GM18951 (cell line): ENCODE measurements at regions of chr2 and their contacts with region 1.

Region 1: GRCh38 chr2:218319813-218320365 is 27.6 kb upstream of the TMBIM1 start:
- POLR2A ChIP-seq: no peak

Region 2: DNA sequence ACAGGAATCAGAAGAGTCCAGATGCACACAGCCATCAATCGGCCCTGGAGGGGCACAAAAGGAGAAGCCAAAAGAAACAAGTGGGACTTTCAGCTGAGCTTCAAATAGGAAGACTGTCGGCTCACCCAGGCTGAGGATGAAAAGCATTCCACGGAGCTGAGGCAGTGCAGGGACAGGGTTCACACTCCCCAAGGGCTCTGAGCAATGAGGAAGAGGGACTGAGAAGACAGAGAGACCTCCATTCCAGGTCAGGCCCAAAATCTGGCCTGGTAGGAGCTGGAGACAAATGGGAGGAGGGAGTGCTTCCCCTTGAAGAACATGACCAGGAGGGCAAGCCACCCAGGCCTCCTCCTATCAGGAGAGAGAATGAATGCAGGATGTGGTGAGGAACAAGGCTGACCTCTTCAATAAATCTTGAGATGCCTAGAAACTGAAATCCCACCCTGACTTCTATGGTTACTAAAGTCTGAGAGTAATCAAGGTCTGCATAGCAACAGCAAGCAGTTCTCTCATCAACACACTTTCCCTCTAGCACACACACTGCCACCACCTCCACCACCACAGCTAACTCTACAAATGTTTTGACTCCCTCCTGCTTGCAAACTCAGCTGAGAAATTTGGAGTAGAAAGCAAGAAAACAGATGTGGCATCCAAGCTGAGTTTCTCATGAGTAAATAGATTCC is 751.5 kb before region 1 on chr2:
- in situ Hi-C with region 1: no loop called
- POLR2A ChIP-seq: no peak

Region 3: GRCh38 chr2:218074031-218074430 is 245.9 kb before region 1 on chr2:
- in situ Hi-C with region 1: no loop called
- POLR2A ChIP-seq: no peak

Region 4: GRCh38 chr2:218387374-218388194 is 67.7 kb after region 1 on chr2:
- in situ Hi-C with region 1: loop called (anchors 10 kb)
- POLR2A ChIP-seq: no peak